IMR-90 (cell line): ENCODE measurements at regions of chr9 and their contacts with region 1.

Region 1: GRCh38 chr9:76725011-76725546 is 39.2 kb upstream of the PCA3 start:
- DNase-seq: no peak
- ATAC-seq: no peak
- H3K4me3 ChIP-seq: no peak overlapping the region
- H3K27ac ChIP-seq: no peak overlapping the region
- H3K4me1 ChIP-seq: no peaks in the 10 kb centered on the region
- H3K27me3 ChIP-seq: peaks cover 2% of the 10 kb centered on the region; the same call in 1 of the 2 replicates
- CTCF ChIP-seq: no peak
- POLR2A ChIP-seq: no peak
- RAD21 ChIP-seq: no peak

Region 2: GRCh38 chr9:76390656-76391055 is 334.4 kb before region 1 on chr9:
- CTCF ChIA-PET with region 1: no interaction called
- POLR2A ChIA-PET with region 1: no interaction called
- dilution Hi-C with region 1: no loop called
- in situ Hi-C with region 1: no loop called
- intact Hi-C with region 1: no loop called
- DNase-seq: no peak
- ATAC-seq: no peak
- H3K4me3 ChIP-seq: no peak overlapping the region
- H3K27ac ChIP-seq: no peak overlapping the region
- H3K4me1 ChIP-seq: peaks cover 2% of the 10 kb centered on the region
- H3K27me3 ChIP-seq: no peaks in the 10 kb centered on the region
- CTCF ChIP-seq: no peak
- POLR2A ChIP-seq: no peak
- RAD21 ChIP-seq: no peak

Region 3: GRCh38 chr9:76451234-76451633 is 273.8 kb before region 1 on chr9:
- CTCF ChIA-PET with region 1: no interaction called
- POLR2A ChIA-PET with region 1: no interaction called
- dilution Hi-C with region 1: no loop called
- in situ Hi-C with region 1: no loop called
- intact Hi-C with region 1: no loop called
- DNase-seq: peak; percentile 85
- ATAC-seq: peak; percentile 53
- H3K4me3 ChIP-seq: no peak overlapping the region
- H3K27ac ChIP-seq: no peak overlapping the region
- H3K4me1 ChIP-seq: peaks cover 11% of the 10 kb centered on the region
- H3K27me3 ChIP-seq: no peaks in the 10 kb centered on the region
- CTCF ChIP-seq: no peak
- POLR2A ChIP-seq: no peak
- RAD21 ChIP-seq: no peak

Region 4: GRCh38 chr9:76787677-76788076 is 62.6 kb after region 1 on chr9:
- CTCF ChIA-PET with region 1: no interaction called
- POLR2A ChIA-PET with region 1: no interaction called
- dilution Hi-C with region 1: no loop called
- in situ Hi-C with region 1: no loop called
- intact Hi-C with region 1: loop called (anchors 10 kb)
- DNase-seq: no peak
- ATAC-seq: no peak
- H3K4me3 ChIP-seq: no peak overlapping the region
- H3K27ac ChIP-seq: no peak overlapping the region
- H3K4me1 ChIP-seq: no peaks in the 10 kb centered on the region
- H3K27me3 ChIP-seq: no peaks in the 10 kb centered on the region
- CTCF ChIP-seq: no peak
- POLR2A ChIP-seq: no peak
- RAD21 ChIP-seq: no peak